ENCODE measurements at regions of chr20 and their contacts with region 1.

Region 1: GRCh38 chr20:21099751-21100577 is 6.2 kb downstream of the LINC00237 start:
- DNase-seq: peak in 4 of 7 donors; percentile 29 to 44 (median 40)
- H3K4me3 ChIP-seq: peak overlapping the region in 3 of 4 donors; percentile 10 to 50 (median 18)
- H3K27ac ChIP-seq: no peak overlapping the region
- H3K4me1 ChIP-seq: peaks cover 12 to 28% of the 10 kb centered on the region in 2 donors
- H3K27me3 ChIP-seq: peaks cover 70% of the 10 kb centered on the region
- CTCF ChIP-seq: no peak
- POLR2A ChIP-seq: no peak

Region 2: DNA sequence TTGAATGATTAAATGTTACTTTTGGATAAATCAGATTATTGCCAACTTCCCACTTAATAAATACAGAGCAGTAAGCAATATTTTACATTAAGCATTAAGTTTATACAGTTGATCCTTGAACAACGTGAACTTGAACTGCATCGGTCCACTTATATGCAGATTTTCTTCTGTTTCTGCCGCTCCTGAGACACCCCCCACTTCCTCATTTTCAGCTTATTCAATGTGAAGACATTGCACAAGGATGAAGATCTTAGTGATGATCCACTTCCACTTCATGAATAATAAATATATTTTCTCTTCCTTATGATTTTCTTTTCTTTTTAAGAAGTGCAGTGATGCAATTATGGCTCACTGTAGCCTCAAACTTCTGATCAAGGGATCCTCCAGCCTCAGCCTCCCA is 161.0 kb before region 1 on chr20:
- intact Hi-C with region 1: no loop called
- DNase-seq: no peak
- H3K4me3 ChIP-seq: no peak overlapping the region
- H3K27ac ChIP-seq: no peak overlapping the region
- H3K4me1 ChIP-seq: no peaks in the 10 kb centered on the region
- H3K27me3 ChIP-seq: no peaks in the 10 kb centered on the region
- CTCF ChIP-seq: no peak
- POLR2A ChIP-seq: no peak

Region 3: DNA sequence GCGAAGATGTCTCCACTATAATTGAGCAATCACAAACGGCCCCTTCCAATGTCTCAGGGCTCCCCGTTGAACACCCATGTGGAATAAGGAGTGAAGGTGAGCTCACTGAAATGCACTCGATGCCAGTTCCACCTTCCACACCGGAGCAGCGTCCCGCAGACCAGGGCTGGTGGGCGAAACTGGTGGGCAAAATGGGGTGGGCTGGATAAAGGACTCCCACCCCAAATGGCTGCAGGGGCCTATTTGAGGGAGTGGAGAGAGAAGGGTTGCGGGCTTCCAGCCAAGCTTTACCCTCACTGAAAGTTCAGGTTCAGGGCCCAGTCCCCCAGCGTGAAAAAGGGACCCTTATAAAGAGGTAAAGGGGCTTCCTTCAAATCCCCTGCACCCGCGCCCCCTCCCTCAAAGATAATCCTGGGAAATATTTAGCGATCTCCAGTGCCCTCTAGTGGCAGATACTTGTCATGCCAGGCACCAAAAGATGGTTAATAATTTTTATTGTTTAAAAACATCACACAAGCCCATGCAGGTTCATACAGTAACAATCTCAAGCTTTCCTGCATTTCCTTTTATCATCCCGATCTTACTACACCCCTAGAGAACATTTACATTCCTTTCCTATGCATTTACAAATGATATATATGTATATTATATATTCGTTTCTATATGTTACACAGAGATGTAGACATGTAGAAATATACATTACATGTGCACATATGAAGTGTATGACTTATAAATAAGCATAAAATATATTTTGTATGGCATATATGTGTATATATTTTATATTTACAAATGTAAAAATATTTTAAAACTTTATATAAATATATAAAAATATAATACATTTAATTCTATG is 472.1 kb after region 1 on chr20:
- intact Hi-C with region 1: loop called in 1 of 2 experiments (anchors 5 kb)
- DNase-seq: peak in 2 of 7 donors; percentile 23 to 50
- H3K4me3 ChIP-seq: no peak overlapping the region
- H3K27ac ChIP-seq: no peak overlapping the region
- H3K4me1 ChIP-seq: no peaks in the 10 kb centered on the region
- H3K27me3 ChIP-seq: no peaks in the 10 kb centered on the region
- CTCF ChIP-seq: peak; percentile 55 to 90 (median 76)
- POLR2A ChIP-seq: no peak

Measured in adrenal gland (tissue), 19 donors.